ENCODE measurements at regions of chr15 and their contacts with region 1.

Region 1: GRCh38 chr15:39801641-39802309 is 19.1 kb upstream of the FSIP1 start:
- DNase-seq: peak; percentile 46
- ATAC-seq: peak; percentile 98
- H3K4me3 ChIP-seq: no peak overlapping the region
- H3K27ac ChIP-seq: no peak overlapping the region
- H3K4me1 ChIP-seq: peaks cover 0 to 4% of the 10 kb centered on the region in 2 experiments; a peak in 1 of 4 replicates
- H3K27me3 ChIP-seq: no peaks in the 10 kb centered on the region
- CTCF ChIP-seq: peak; percentile 24 to 60 (median 59); a peak in 5 of 6 replicates
- POLR2A ChIP-seq: no peak
- RAD21 ChIP-seq: peak; percentile 54

Region 2: GRCh38 chr15:39814487-39814886 is 12.7 kb after region 1 on chr15:
- CTCF ChIA-PET with region 1: no interaction called
- POLR2A ChIA-PET with region 1: no interaction called
- RAD21 ChIA-PET with region 1: no interaction called
- intact Hi-C with region 1: no loop called
- DNase-seq: no peak
- ATAC-seq: no peak
- H3K4me3 ChIP-seq: no peak overlapping the region
- H3K27ac ChIP-seq: no peak overlapping the region
- H3K4me1 ChIP-seq: no peaks in the 10 kb centered on the region
- H3K27me3 ChIP-seq: no peaks in the 10 kb centered on the region
- CTCF ChIP-seq: no peak
- POLR2A ChIP-seq: no peak
- RAD21 ChIP-seq: no peak

Region 3: GRCh38 chr15:39874890-39875549 is 73.2 kb after region 1 on chr15:
- CTCF ChIA-PET with region 1: interaction called, 5 read pairs
- POLR2A ChIA-PET with region 1: no interaction called
- RAD21 ChIA-PET with region 1: no interaction called
- intact Hi-C with region 1: loop called (anchors 1 kb)
- DNase-seq: peak; percentile 24
- ATAC-seq: peak; percentile 81
- H3K4me3 ChIP-seq: no peak overlapping the region
- H3K27ac ChIP-seq: no peak overlapping the region
- H3K4me1 ChIP-seq: no peaks in the 10 kb centered on the region
- H3K27me3 ChIP-seq: no peaks in the 10 kb centered on the region
- CTCF ChIP-seq: peak; percentile 55 to 77 (median 72); a peak in 5 of 6 replicates
- POLR2A ChIP-seq: no peak
- RAD21 ChIP-seq: peak; percentile 64

Measured in HCT116 (cell line).